Posterior cingulate gyrus (tissue), 11 donors: ENCODE measurements at regions of chr15 and their contacts with region 1.

Region 1: DNA sequence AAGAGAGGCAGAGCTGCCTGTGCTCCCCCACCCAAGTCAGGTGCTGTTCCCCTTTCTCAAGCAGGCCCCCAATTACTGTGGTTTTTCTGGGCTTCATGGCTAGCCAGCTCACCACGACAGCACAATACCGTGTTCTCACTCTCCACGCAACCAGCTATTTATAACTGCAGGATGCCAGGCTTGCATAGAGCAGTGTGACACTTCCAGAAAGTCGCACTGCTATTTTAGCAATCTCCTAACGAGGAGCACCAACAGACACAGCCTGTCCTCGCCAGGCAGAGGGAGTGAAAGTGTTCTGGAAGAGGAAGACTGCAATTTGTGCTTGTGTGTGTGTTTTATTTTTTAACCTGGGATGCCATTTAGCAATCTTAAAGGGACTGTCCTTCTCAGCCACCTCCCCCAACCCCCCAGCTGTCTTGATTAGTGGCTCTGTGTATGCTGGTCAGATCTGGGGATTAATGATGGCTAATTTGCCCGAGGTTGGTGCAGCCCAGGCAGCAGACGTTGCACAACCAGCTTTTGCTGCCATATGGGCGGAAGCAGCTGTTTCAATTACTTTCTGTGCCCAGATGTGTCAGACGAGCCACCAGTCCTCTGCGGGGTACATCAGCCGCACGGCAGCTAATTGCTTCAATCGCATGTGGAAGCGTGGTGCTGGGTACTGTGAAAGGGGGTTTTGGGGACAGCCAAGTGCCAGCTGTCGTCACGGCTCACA is 268.0 kb upstream of the ARRDC4 start:
- DNase-seq: peak; percentile 10 to 92 (median 56)

Region 2: GRCh38 chr15:97446141-97446540 is 246.3 kb before region 1 on chr15:
- intact Hi-C with region 1: no loop called
- DNase-seq: no peak

Region 3: GRCh38 chr15:97521381-97522285 is 170.8 kb before region 1 on chr15:
- intact Hi-C with region 1: loop called (anchors 10 kb)
- DNase-seq: peak; percentile 26 to 95 (median 64)

Region 4: DNA sequence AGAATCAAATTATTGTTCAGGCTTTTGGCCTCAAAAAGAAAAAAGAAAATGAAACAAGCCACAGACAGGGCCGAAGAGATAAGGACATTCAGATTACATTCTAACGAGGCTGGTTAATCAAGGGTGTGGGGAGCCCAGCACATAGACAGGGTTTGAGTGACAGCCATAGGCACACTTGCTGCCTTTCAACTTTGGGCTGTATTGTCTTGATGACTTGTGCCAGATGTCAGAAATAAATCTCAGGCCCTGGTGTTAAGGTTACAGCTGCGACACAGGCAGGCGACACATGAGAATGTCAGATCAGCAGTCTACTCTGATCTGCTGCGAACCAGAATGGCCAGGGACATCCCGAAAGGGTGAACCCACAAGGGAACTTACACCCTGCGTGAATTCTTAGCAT is 36.8 kb after region 1 on chr15:
- intact Hi-C with region 1: no loop called
- DNase-seq: no peak